ENCODE measurements at regions of chr11 and their contacts with region 1.

Region 1: DNA sequence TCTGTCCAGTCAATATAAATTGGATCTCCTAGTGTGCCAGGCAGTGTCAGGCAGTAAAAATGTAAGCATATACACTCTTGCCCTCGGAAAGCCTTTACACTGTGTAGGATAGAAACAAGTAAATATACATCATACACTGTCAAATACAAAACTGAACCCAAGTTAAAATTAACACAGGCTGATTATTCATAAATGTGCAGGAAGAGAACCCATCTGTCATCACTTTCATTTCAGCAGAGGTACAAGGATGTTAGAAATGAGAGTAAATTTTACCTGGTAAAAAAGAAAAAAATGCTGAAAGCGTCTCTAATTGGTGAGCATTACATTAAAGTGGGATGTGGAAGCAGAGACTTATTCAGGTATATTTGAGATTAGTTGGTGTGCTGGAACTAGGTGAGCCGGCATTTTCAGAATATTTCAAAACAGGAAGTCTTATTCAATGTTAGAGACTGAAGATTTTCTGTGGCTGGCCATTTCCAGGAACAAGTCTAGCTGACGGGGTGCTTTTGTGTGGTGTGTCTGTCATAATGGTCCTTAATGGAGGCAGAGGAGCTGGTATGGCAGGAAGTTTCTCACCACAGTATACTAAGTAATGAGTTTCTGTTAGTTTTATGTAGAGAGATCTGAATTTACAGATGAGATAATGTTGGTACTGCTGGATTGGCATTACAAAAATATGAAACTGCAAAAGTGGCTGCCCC is 192.6 kb downstream of the CASP12 start:
- DNase-seq: peak; percentile 34 to 92 (median 71)
- ATAC-seq: peak; percentile 95
- H3K4me3 ChIP-seq: peak overlapping the region; percentile 35 to 44
- H3K4me3 Mint-ChIP-seq: peak overlapping the region; percentile 75
- H3K27ac ChIP-seq: peak overlapping the region; percentile 71 to 83
- H3K27ac Mint-ChIP-seq: peak overlapping the region; percentile 98
- H3K4me1 ChIP-seq: peaks cover 48% of the 10 kb centered on the region
- H3K4me1 Mint-ChIP-seq: peaks cover 62% of the 10 kb centered on the region
- H3K27me3 ChIP-seq: no peaks in the 10 kb centered on the region
- H3K27me3 Mint-ChIP-seq: no peaks in the 10 kb centered on the region
- CTCF ChIP-seq: no peak

Region 2: GRCh38 chr11:103997082-103997481 is 708.6 kb before region 1 on chr11:
- CTCF ChIA-PET with region 1: no interaction called
- POLR2A ChIA-PET with region 1: no interaction called
- intact Hi-C with region 1: no loop called
- DNase-seq: no peak
- ATAC-seq: no peak
- H3K4me3 ChIP-seq: no peak overlapping the region
- H3K4me3 Mint-ChIP-seq: no peak overlapping the region
- H3K27ac ChIP-seq: no peak overlapping the region
- H3K27ac Mint-ChIP-seq: no peak overlapping the region
- H3K4me1 ChIP-seq: no peaks in the 10 kb centered on the region
- H3K4me1 Mint-ChIP-seq: no peaks in the 10 kb centered on the region
- H3K27me3 ChIP-seq: no peaks in the 10 kb centered on the region
- H3K27me3 Mint-ChIP-seq: no peaks in the 10 kb centered on the region
- CTCF ChIP-seq: no peak

Region 3: DNA sequence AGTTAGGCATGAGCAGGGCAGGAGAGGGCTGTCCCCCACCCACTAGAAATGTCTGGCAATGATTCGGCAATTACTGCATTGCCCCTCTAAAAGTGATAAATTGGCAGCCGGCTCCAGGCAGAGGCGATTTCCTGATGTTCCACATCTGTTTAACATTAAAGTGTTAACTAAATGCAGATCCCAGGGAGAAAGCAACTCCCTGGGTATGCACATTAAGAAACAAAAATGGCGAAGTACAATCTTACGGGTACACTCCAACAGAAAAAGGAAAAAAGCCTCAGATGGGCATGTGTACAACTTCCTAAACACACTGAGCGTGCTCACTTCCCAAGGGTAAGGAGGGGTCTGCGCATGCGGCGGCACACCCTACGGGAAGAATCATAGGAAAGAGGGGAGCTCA is 121.8 kb before region 1 on chr11:
- CTCF ChIA-PET with region 1: no interaction called
- POLR2A ChIA-PET with region 1: no interaction called
- intact Hi-C with region 1: no loop called
- DNase-seq: no peak
- ATAC-seq: no peak
- H3K4me3 ChIP-seq: no peak overlapping the region
- H3K4me3 Mint-ChIP-seq: no peak overlapping the region
- H3K27ac ChIP-seq: no peak overlapping the region
- H3K27ac Mint-ChIP-seq: no peak overlapping the region
- H3K4me1 ChIP-seq: no peaks in the 10 kb centered on the region
- H3K4me1 Mint-ChIP-seq: no peaks in the 10 kb centered on the region
- H3K27me3 ChIP-seq: no peaks in the 10 kb centered on the region
- H3K27me3 Mint-ChIP-seq: peaks cover 18% of the 10 kb centered on the region
- CTCF ChIP-seq: no peak

Region 4: DNA sequence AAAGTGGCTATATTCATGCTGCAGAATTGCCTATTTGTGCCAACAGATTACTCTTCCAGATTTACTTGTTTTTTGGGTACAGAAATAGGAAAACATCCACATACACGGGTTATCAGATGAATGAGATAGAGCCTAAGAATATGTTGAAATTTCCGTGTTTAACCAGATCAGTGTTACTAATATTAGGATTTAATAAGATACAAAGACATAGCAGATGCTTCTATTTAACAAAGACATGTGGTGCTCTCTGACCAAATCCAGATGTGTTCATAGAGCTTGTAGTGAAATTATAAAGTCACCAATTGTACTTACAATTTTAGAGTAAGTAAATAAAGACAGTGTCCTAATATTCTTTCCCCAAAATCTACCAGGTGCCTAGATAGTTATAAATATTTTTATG is 15.4 kb before region 1 on chr11:
- CTCF ChIA-PET with region 1: interaction called, 3 read pairs
- POLR2A ChIA-PET with region 1: no interaction called
- intact Hi-C with region 1: loop called in 1 of 2 experiments (anchors 2 kb)
- DNase-seq: no peak
- ATAC-seq: no peak
- H3K4me3 ChIP-seq: no peak overlapping the region
- H3K4me3 Mint-ChIP-seq: no peak overlapping the region
- H3K27ac ChIP-seq: no peak overlapping the region
- H3K27ac Mint-ChIP-seq: no peak overlapping the region
- H3K4me1 ChIP-seq: no peaks in the 10 kb centered on the region
- H3K4me1 Mint-ChIP-seq: peaks cover 2% of the 10 kb centered on the region
- H3K27me3 ChIP-seq: no peaks in the 10 kb centered on the region
- H3K27me3 Mint-ChIP-seq: no peaks in the 10 kb centered on the region
- CTCF ChIP-seq: no peak

Region 5: GRCh38 chr11:104784684-104785460 is 79.2 kb after region 1 on chr11:
- CTCF ChIA-PET with region 1: no interaction called
- POLR2A ChIA-PET with region 1: no interaction called
- intact Hi-C with region 1: loop called in 1 of 2 experiments (anchors 5 kb)
- DNase-seq: peak in 1 of 9 experiments; percentile 27
- ATAC-seq: no peak
- H3K4me3 ChIP-seq: no peak overlapping the region
- H3K4me3 Mint-ChIP-seq: no peak overlapping the region
- H3K27ac ChIP-seq: no peak overlapping the region
- H3K27ac Mint-ChIP-seq: no peak overlapping the region
- H3K4me1 ChIP-seq: peaks cover 5% of the 10 kb centered on the region
- H3K4me1 Mint-ChIP-seq: peaks cover 8% of the 10 kb centered on the region
- H3K27me3 ChIP-seq: no peaks in the 10 kb centered on the region
- H3K27me3 Mint-ChIP-seq: no peaks in the 10 kb centered on the region
- CTCF ChIP-seq: no peak

Region 6: GRCh38 chr11:104799251-104799650 is 93.6 kb after region 1 on chr11:
- CTCF ChIA-PET with region 1: no interaction called
- POLR2A ChIA-PET with region 1: no interaction called
- intact Hi-C with region 1: loop called in 1 of 2 experiments (anchors 2 kb)
- DNase-seq: peak in 1 of 9 experiments; percentile 25
- ATAC-seq: peak; percentile 40
- H3K4me3 ChIP-seq: peak overlapping the region; percentile 0 to 45
- H3K4me3 Mint-ChIP-seq: peak overlapping the region; percentile 86
- H3K27ac ChIP-seq: peak overlapping the region in 1 of 2 experiments; percentile 59
- H3K27ac Mint-ChIP-seq: peak overlapping the region; percentile 90
- H3K4me1 ChIP-seq: peaks cover 13% of the 10 kb centered on the region
- H3K4me1 Mint-ChIP-seq: peaks cover 38% of the 10 kb centered on the region
- H3K27me3 ChIP-seq: no peaks in the 10 kb centered on the region
- H3K27me3 Mint-ChIP-seq: no peaks in the 10 kb centered on the region
- CTCF ChIP-seq: no peak

Region 7: GRCh38 chr11:104918113-104918824 is 212.6 kb after region 1 on chr11:
- CTCF ChIA-PET with region 1: no interaction called
- POLR2A ChIA-PET with region 1: no interaction called
- intact Hi-C with region 1: loop called in 1 of 2 experiments (anchors 5 kb)
- DNase-seq: peak in 2 of 9 experiments; percentile 43 to 61
- ATAC-seq: peak; percentile 73
- H3K4me3 ChIP-seq: peak overlapping the region; percentile 53 to 64
- H3K4me3 Mint-ChIP-seq: peak overlapping the region; percentile 89
- H3K27ac ChIP-seq: peak overlapping the region; percentile 47 to 80
- H3K27ac Mint-ChIP-seq: peak overlapping the region; percentile 88
- H3K4me1 ChIP-seq: peaks cover 14% of the 10 kb centered on the region
- H3K4me1 Mint-ChIP-seq: peaks cover 54% of the 10 kb centered on the region
- H3K27me3 ChIP-seq: no peaks in the 10 kb centered on the region
- H3K27me3 Mint-ChIP-seq: no peaks in the 10 kb centered on the region
- CTCF ChIP-seq: no peak

Region 8: DNA sequence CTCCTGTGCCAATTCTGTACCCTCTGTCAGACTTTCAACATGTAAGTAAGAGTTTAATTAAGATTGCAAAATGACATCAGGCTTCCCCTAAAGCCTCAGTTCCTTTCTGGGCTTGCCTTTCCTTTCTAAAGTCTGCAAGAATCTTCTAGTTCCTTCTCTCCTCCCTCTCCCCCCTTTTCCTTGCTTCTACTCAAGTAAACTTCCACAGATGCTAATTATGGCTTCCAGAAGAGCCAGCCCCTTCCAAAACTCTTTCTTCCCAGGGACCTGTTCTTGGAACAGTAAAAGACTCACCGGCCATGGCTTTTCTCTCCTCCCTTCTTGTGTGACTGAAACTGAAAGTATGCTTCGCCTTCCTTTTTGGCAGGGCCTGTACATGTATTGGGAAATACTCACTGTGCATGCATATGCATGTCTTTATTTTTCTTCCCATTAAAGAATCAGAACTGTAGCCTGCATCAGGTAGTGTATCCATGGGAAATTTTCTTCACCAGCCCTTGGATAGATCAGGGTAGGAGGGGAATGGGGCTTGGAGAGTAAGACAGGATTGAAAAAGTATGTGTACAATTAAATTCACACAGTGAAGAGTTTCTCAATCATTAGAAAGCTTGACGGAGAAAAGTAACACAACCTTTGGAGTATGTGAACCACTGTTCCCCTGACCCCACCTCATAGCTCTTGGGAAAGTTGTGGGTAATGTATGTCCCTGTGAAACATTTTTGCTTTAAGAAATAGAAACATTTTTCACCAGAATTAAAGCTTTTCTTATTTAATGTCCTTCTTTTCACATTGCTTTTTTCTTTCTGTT is 329.4 kb after region 1 on chr11 and contains the start of gene CASP1:
- CTCF ChIA-PET with region 1: no interaction called
- POLR2A ChIA-PET with region 1: interaction called, 4 read pairs
- intact Hi-C with region 1: loop called in 1 of 2 experiments (anchors 5 kb)
- DNase-seq: peak in 7 of 9 experiments; percentile 10 to 70 (median 35)
- ATAC-seq: peak; percentile 75
- H3K4me3 ChIP-seq: peak within 1 kb of the TSS; percentile 64 to 66
- H3K4me3 Mint-ChIP-seq: peak within 1 kb of the TSS; percentile 92
- H3K27ac ChIP-seq: peak within 1 kb of the TSS; percentile 59 to 84
- H3K27ac Mint-ChIP-seq: peak within 1 kb of the TSS; percentile 93
- H3K4me1 ChIP-seq: peaks cover 28% of the 10 kb centered on the region
- H3K4me1 Mint-ChIP-seq: peaks cover 52% of the 10 kb centered on the region
- H3K27me3 ChIP-seq: no peaks in the 10 kb centered on the region
- H3K27me3 Mint-ChIP-seq: no peaks in the 10 kb centered on the region
- CTCF ChIP-seq: no peak
- total RNA-seq, gene CASP1: 11.3 to 15.9 TPM

Region 9: DNA sequence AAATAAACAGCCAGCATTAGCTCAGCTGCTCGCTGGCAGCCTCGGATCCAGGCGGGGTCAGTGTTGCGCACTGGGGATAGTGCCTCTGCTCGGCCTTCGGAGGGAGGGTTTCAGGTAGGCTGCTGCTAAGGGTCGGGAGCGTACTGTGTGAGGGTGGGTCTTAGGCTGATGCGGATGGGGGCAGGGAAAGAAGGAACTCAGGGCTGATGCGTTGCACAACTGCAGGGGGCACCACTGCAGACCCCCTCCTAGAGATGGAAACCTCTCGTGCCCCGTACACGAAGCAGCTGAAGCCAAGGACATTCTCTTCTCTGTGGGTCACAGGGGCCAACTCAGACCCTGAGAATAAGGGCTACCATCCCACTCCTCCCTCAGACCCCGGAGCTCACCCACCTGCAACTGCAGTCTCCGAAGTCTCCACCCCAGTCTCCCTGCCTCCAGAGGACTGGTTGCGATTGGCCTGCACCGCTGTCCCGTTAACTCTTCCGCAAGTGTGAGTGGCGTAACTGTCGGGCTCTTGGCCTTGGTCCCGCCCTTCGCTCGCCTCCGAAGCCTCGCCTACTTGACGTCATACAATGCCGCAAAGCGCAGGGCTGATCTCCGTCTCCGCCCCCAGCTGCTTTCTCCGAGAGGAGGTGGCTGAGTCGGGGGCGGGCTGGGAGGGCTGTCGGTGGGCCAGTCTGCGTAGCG is 1371.4 kb after region 1 on chr11 and contains the start of gene KBTBD3:
- CTCF ChIA-PET with region 1: no interaction called
- POLR2A ChIA-PET with region 1: no interaction called
- intact Hi-C with region 1: loop called in 1 of 2 experiments (anchors 10 kb)
- DNase-seq: peak; percentile 97 to 100 (median 98)
- ATAC-seq: peak; percentile 91
- H3K4me3 ChIP-seq: peak within 1 kb of the TSS; percentile 88 to 95
- H3K4me3 Mint-ChIP-seq: peak within 1 kb of the TSS; percentile 98
- H3K27ac ChIP-seq: peak within 1 kb of the TSS; percentile 87 to 89
- H3K27ac Mint-ChIP-seq: peak within 1 kb of the TSS; percentile 99
- H3K4me1 ChIP-seq: peaks cover 48% of the 10 kb centered on the region
- H3K4me1 Mint-ChIP-seq: peaks cover 69% of the 10 kb centered on the region
- H3K27me3 ChIP-seq: no peaks in the 10 kb centered on the region
- H3K27me3 Mint-ChIP-seq: no peaks in the 10 kb centered on the region
- CTCF ChIP-seq: peak; percentile 62
- total RNA-seq, gene KBTBD3: 3.3 to 6.7 TPM

Measured in CD8-positive, alpha-beta T cell (primary cell).